ENCODE measurements at regions of chr7 and their contacts with region 1.

Region 1: DNA sequence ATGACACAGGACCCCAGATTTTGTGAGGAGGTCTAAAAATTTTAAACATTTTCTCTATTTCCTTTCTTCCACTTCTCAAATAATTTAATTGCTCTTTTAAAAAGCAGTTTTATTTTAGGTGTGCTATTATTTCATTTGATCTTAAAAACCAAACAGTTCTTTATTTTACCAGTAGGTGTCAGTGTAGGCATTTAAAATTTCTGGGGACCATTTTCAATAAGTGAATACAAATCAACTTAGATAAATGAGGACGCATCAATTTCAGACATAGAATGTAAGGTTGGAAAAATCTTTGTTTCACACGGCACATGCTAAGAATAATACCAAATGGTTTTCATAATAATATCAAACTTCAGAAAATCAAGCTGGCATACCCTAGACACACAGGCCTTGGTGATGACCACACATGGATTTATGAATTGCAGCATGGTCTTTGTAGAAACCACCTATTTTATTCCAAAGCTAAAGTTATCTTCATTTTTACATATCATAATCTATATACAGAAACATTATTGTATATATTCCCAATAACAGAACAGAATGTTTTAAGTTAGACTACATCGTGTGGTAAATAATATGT is 127.6 kb upstream of the SLC26A5 start:
- DNase-seq: peak; percentile 22
- ATAC-seq: no peak
- H3K4me3 ChIP-seq: no peak overlapping the region
- H3K27ac ChIP-seq: no peak overlapping the region
- H3K4me1 ChIP-seq: no peaks in the 10 kb centered on the region
- H3K27me3 ChIP-seq: 0 out of 2 replicates have a peak, but pooled peaks cover 6% of the 10 kb centered on the region
- CTCF ChIP-seq: peak; percentile 62; the same call in 1 of the 2 replicates

Region 2: DNA sequence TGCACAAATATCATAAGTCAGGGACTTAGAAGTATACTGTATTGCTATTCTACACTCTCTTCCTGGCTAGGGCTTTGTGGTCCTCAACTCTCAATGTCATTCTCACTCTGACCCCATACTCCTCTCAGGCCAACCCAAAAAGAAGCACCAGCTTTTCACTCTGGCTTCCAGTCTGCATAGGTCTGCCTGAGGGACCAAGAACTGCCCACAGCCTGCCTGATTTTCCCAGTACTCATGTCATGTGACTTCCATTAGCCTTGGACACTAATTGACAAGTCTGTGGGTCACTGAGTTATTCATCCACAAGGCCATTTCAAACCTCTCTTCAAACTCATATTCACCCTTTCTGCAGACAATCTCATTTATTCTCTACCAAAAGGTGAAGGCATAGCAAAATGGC is 256.6 kb before region 1 on chr7:
- CTCF ChIA-PET with region 1: no interaction called
- POLR2A ChIA-PET with region 1: no interaction called
- in situ Hi-C with region 1: no loop called
- intact Hi-C with region 1: no loop called
- DNase-seq: no peak
- ATAC-seq: no peak
- H3K4me3 ChIP-seq: no peak overlapping the region
- H3K27ac ChIP-seq: no peak overlapping the region
- H3K4me1 ChIP-seq: no peaks in the 10 kb centered on the region
- H3K27me3 ChIP-seq: no peaks in the 10 kb centered on the region
- CTCF ChIP-seq: no peak

Region 3: GRCh38 chr7:103447073-103447951 is 126.3 kb before region 1 on chr7:
- CTCF ChIA-PET with region 1: no interaction called
- POLR2A ChIA-PET with region 1: no interaction called
- in situ Hi-C with region 1: no loop called
- intact Hi-C with region 1: loop called (anchors 5 kb)
- DNase-seq: peak; percentile 46
- ATAC-seq: peak; percentile 96
- H3K4me3 ChIP-seq: no peak overlapping the region
- H3K27ac ChIP-seq: no peak overlapping the region
- H3K4me1 ChIP-seq: peaks cover 3% of the 10 kb centered on the region; the same call in 1 of the 2 replicates
- H3K27me3 ChIP-seq: peaks cover 51% of the 10 kb centered on the region
- CTCF ChIP-seq: peak; percentile 91

Region 4: GRCh38 chr7:104156842-104157277 is 583.3 kb after region 1 on chr7:
- CTCF ChIA-PET with region 1: interaction called, 3 read pairs
- POLR2A ChIA-PET with region 1: no interaction called
- in situ Hi-C with region 1: no loop called
- intact Hi-C with region 1: loop called (anchors 2 kb)
- DNase-seq: peak; percentile 17
- ATAC-seq: no peak
- H3K4me3 ChIP-seq: no peak overlapping the region
- H3K27ac ChIP-seq: no peak overlapping the region
- H3K4me1 ChIP-seq: no peaks in the 10 kb centered on the region
- H3K27me3 ChIP-seq: no peaks in the 10 kb centered on the region
- CTCF ChIP-seq: peak; percentile 66; the same call in 1 of the 2 replicates

Region 5: DNA sequence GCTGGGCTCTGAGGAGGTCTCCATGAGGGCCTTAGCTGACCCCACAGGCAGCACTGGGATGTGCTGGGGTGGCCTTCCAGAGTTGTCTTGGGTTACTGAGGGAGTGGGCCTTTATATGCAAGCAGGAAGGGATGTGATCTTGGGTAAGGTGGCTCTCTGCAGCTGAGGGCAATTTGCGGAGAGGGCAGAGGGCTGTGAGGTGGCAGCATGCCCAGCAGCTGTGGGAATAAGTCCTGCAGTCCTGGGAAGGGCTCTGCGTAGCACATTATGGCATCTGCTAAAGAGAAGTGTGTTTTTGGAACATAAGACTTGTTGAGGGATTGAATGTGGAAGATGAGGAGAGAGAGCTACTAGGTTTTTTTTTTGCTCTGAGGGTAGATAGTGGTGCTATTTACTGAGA is 1340.9 kb after region 1 on chr7:
- CTCF ChIA-PET with region 1: no interaction called
- POLR2A ChIA-PET with region 1: no interaction called
- in situ Hi-C with region 1: no loop called
- intact Hi-C with region 1: loop called (anchors 10 kb)
- DNase-seq: no peak
- ATAC-seq: no peak
- H3K4me3 ChIP-seq: no peak overlapping the region
- H3K27ac ChIP-seq: no peak overlapping the region
- H3K4me1 ChIP-seq: no peaks in the 10 kb centered on the region
- H3K27me3 ChIP-seq: 0 out of 2 replicates have a peak, but pooled peaks cover 2% of the 10 kb centered on the region
- CTCF ChIP-seq: no peak